ENCODE measurements at regions of chr6 and their contacts with region 1.

Region 1: GRCh38 chr6:131627724-131628682 is at the start of gene MED23:
- DNase-seq: peak; percentile 97
- H3K4me3 ChIP-seq: peak within 1 kb of the TSS; percentile 51 to 79 (median 75)
- H3K27ac ChIP-seq: peak within 1 kb of the TSS; percentile 1
- H3K4me1 ChIP-seq: peaks cover 8% of the 10 kb centered on the region
- H3K27me3 ChIP-seq: peaks cover 4 to 9% of the 10 kb centered on the region in 2 experiments
- CTCF ChIP-seq: peak; percentile 99 to 100
- POLR2A ChIP-seq: peak; percentile 63
- total RNA-seq, gene MED23: 28.5 and 29.5 TPM in 2 replicates

Region 2: GRCh38 chr6:131519670-131520436 is 108.2 kb before region 1 on chr6:
- CTCF ChIA-PET with region 1: interaction called, 4 read pairs
- POLR2A ChIA-PET with region 1: no interaction called
- dilution Hi-C with region 1: no loop called
- intact Hi-C with region 1: loop called (anchors 2 kb)
- DNase-seq: peak; percentile 54
- H3K4me3 ChIP-seq: no peak overlapping the region
- H3K27ac ChIP-seq: no peak overlapping the region
- H3K4me1 ChIP-seq: no peaks in the 10 kb centered on the region
- H3K27me3 ChIP-seq: no peaks in the 10 kb centered on the region
- CTCF ChIP-seq: peak; percentile 49 to 65
- POLR2A ChIP-seq: no peak

Region 3: DNA sequence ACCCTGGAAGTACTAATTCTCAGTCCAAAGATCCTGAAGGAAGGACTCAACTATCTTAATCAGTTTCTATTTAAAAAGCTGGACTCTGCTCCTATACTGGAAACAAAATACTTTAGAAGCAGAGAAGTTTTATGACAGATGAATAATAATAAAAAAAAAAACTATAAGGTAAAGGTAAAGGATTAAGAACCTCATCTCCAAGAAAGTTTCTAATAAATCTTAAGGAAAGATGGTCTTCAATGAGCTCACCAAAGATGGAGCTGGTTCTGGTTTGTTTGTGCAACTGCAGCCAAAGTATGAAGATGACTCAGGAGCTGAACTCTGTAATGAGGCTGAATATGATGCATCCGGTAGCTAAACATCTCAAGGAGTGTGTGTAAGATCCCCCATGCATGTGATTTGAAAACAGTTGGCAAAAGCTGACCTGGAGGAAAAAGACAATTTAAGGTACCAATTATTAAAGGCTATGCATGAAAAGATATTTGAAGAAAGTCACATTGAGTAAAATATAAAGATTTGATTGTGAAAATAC is 25.2 kb before region 1 on chr6:
- CTCF ChIA-PET with region 1: interaction called, 10 read pairs
- POLR2A ChIA-PET with region 1: no interaction called
- dilution Hi-C with region 1: no loop called
- intact Hi-C with region 1: no loop called
- DNase-seq: no peak
- H3K4me3 ChIP-seq: no peak overlapping the region
- H3K27ac ChIP-seq: no peak overlapping the region
- H3K4me1 ChIP-seq: no peaks in the 10 kb centered on the region
- H3K27me3 ChIP-seq: no peaks in the 10 kb centered on the region
- CTCF ChIP-seq: no peak
- POLR2A ChIP-seq: no peak

Region 4: GRCh38 chr6:131615275-131615674 is 12.7 kb before region 1 on chr6:
- CTCF ChIA-PET with region 1: interaction called, 16 read pairs
- POLR2A ChIA-PET with region 1: no interaction called
- dilution Hi-C with region 1: no loop called
- intact Hi-C with region 1: loop called (anchors 2 kb)
- DNase-seq: no peak
- H3K4me3 ChIP-seq: no peak overlapping the region
- H3K27ac ChIP-seq: no peak overlapping the region
- H3K4me1 ChIP-seq: no peaks in the 10 kb centered on the region
- H3K27me3 ChIP-seq: no peaks in the 10 kb centered on the region
- CTCF ChIP-seq: no peak
- POLR2A ChIP-seq: no peak

Region 5: GRCh38 chr6:131640100-131640499 is 12.1 kb after region 1 on chr6:
- CTCF ChIA-PET with region 1: interaction called, 31 read pairs
- POLR2A ChIA-PET with region 1: no interaction called
- dilution Hi-C with region 1: no loop called
- intact Hi-C with region 1: no loop called
- DNase-seq: no peak
- H3K4me3 ChIP-seq: no peak overlapping the region
- H3K27ac ChIP-seq: no peak overlapping the region
- H3K4me1 ChIP-seq: no peaks in the 10 kb centered on the region
- H3K27me3 ChIP-seq: peaks cover 0 to 14% of the 10 kb centered on the region in 2 experiments
- CTCF ChIP-seq: no peak
- POLR2A ChIP-seq: no peak

Region 6: DNA sequence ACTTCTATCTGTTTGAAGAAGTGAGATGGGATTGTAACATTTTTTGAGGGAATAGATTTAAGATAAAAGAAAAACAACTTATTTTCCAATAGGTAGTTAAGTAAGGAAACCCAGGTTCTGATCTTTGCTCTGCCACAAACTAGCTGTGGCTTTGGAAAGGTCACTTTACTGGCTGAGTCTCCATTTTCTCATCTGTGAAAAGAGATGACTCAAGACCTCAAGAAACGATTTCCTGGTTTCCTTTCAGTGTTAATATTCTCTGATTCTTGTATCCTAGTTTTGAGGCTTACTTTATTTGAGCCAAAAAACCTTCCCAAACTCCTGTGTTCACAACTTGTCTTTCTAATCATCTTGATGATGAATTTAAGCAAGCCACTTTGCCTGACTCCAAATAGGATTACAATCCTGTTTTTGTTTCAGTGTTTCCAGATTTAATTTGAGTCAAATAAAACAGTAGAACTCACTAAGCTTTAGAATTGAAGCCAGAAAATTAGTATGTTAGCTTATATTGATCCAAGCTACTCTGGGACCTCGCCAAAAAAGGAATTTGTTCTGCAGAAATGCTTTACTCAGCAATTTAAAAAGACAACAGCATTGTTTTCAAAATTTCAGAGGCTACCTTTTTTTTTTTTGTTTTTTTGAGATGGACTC is 230.9 kb after region 1 on chr6:
- CTCF ChIA-PET with region 1: interaction called, 5 read pairs
- POLR2A ChIA-PET with region 1: no interaction called
- dilution Hi-C with region 1: no loop called
- intact Hi-C with region 1: loop called (anchors 1 kb)
- DNase-seq: peak; percentile 33
- H3K4me3 ChIP-seq: no peak overlapping the region
- H3K27ac ChIP-seq: no peak overlapping the region
- H3K4me1 ChIP-seq: peaks cover 8% of the 10 kb centered on the region
- H3K27me3 ChIP-seq: no peaks in the 10 kb centered on the region
- CTCF ChIP-seq: no peak
- POLR2A ChIP-seq: no peak

Region 7: GRCh38 chr6:131976545-131977061 is 348.6 kb after region 1 on chr6:
- CTCF ChIA-PET with region 1: no interaction called
- POLR2A ChIA-PET with region 1: no interaction called
- dilution Hi-C with region 1: no loop called
- intact Hi-C with region 1: no loop called
- DNase-seq: peak; percentile 81
- H3K4me3 ChIP-seq: no peak overlapping the region
- H3K27ac ChIP-seq: no peak overlapping the region
- H3K4me1 ChIP-seq: peaks cover 21% of the 10 kb centered on the region
- H3K27me3 ChIP-seq: no peaks in the 10 kb centered on the region
- CTCF ChIP-seq: no peak
- POLR2A ChIP-seq: no peak